ENCODE measurements at regions of chr16 and their contacts with region 1.

Region 1: GRCh38 chr16:89815639-89816348 is 653 bp downstream of the FANCA start:
- DNase-seq: peak; percentile 46
- ATAC-seq: no peak

Region 2: DNA sequence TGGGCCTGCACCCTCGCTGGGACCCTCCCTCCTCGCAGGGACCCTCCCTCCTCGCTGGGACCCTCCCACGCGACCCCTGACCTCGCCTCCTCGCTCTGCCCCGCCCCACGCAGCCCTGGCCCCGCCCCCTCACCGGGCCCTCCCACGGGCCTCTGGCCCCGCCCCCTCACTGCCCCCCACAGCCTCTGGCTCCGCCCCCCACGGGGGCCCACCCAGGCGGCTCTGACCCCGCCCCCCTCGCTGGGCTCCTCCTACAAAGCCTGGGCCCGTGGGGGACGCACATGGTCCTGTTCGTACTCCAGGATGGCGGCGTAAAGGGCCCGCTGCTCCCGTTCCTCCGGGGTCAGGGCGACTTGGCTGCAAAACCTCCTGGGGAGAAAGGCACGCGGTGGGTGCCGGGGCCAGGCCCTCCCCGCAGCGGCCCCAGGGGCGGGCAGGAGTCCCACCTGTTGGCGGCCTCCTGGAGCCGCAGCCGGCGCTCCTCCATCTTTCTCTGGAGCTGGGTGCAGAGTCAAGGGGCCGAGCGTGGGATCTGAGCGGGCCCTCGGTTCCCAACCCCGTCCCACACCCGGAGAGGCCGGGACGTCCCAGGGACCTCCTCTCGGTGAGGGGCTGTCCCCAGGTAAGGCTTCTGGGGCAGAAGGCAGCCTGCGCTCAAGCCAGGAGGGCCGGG is 104.1 kb before region 1 on chr16:
- intact Hi-C with region 1: no loop called
- DNase-seq: no peak
- ATAC-seq: peak; percentile 30

Region 3: GRCh38 chr16:89860747-89861304 is 45.0 kb after region 1 on chr16:
- intact Hi-C with region 1: loop called (anchors 10 kb)
- DNase-seq: peak; percentile 87
- ATAC-seq: peak; percentile 55